Body of pancreas (tissue), 4 donors: ENCODE measurements at regions of chrX and their contacts with region 1.

Region 1: DNA sequence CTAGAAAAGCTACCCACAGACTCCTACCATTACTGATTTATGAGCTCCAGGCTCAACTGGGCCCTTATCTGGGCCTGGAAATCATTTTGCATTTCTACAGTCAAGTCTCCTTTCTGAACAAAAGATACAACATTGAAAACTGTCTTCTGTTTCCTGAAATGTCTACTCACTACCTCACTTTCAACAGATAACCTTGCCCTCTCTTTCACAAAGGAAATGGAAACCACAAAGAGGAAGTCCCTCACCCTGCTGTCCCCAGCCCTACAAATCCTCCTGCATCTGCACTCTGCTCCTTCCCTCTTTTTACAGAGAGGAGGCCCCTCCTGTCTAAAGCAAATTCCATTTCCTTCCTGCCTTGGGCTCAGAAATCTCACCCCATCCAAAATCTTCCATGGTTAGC is 24.8 kb upstream of the CYBB start:
- DNase-seq: peak in 1 of 4 donors; percentile 6
- ATAC-seq: no peak
- H3K4me3 ChIP-seq: no peak overlapping the region
- H3K27ac ChIP-seq: no peak overlapping the region
- H3K4me1 ChIP-seq: no peaks in the 10 kb centered on the region
- H3K27me3 ChIP-seq: no peaks in the 10 kb centered on the region
- CTCF ChIP-seq: no peak
- POLR2A ChIP-seq: no peak

Region 2: GRCh38 chrX:37825209-37825842 is 70.3 kb after region 1 on chrX:
- intact Hi-C with region 1: loop called (anchors 10 kb)
- DNase-seq: peak; percentile 46 to 68 (median 56)
- ATAC-seq: peak; percentile 58
- H3K4me3 ChIP-seq: no peak overlapping the region
- H3K27ac ChIP-seq: no peak overlapping the region
- H3K4me1 ChIP-seq: peaks cover 9% of the 10 kb centered on the region
- H3K27me3 ChIP-seq: no peaks in the 10 kb centered on the region
- CTCF ChIP-seq: peak; percentile 61 to 89 (median 83)
- POLR2A ChIP-seq: no peak